Activated CD4-positive, alpha-beta T cell treated with anti-CD3 and anti-CD28 coated beads for 36 hours (primary cell): ENCODE measurements at regions of chr14 and their contacts with region 1.

Region 1: GRCh38 chr14:106622200-106622745 is 1095.9 kb downstream of the TMEM121 start:
- DNase-seq: peak; percentile 52
- ATAC-seq: peak; percentile 27
- H3K4me3 Mint-ChIP-seq: no peak overlapping the region
- H3K27ac Mint-ChIP-seq: no peak overlapping the region
- H3K4me1 Mint-ChIP-seq: peaks cover 13% of the 10 kb centered on the region
- H3K27me3 Mint-ChIP-seq: peaks cover 24% of the 10 kb centered on the region

Region 2: DNA sequence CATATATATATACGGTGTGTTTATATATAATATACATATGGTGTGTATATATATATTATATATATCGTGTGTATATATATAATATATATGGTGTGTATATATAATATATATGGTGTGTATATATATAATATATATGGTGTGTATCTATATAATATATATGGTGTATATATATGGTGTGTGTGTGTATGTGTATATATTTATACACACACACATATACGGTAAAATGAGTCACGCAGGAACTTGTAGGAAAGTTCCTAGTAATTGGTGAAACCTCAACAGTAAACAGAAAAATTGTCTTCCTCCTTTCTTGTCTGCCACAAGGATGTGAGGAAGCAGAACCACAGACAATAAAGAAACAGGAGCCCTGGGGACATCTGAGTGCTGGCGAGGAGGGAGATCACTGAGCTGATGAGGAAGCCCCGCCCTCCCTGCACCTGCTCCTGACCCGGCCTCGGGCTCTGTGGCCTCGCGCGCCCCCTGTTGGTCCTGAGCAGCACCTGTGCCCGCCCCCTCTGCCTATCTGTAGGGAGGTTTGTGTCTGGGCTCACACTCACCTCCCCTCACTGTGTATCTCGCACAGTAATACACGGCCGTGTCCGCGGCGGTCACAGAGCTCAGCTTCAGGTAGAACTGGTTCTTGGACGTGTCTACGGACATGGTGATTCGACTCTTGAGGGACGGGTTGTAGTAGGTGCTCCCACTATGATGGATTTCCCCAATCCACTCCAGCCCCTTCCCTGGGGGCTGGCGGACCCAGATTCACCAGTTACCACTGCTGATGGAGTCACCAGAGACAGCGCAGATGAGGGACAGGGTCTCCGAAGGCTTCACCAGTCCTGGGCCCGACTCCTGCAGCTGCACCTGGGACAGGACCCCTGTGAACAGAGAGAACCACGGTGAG is 16.5 kb before region 1 on chr14:
- CTCF ChIA-PET with region 1: interaction called, 18 read pairs
- POLR2A ChIA-PET with region 1: no interaction called
- intact Hi-C with region 1: no loop called
- DNase-seq: peak; percentile 93
- ATAC-seq: peak; percentile 99
- H3K4me3 Mint-ChIP-seq: no peak overlapping the region
- H3K27ac Mint-ChIP-seq: no peak overlapping the region
- H3K4me1 Mint-ChIP-seq: peaks cover 3% of the 10 kb centered on the region
- H3K27me3 Mint-ChIP-seq: peaks cover 44% of the 10 kb centered on the region

Region 3: GRCh38 chr14:106642090-106642489 is 19.8 kb after region 1 on chr14:
- CTCF ChIA-PET with region 1: interaction called, 14 read pairs
- POLR2A ChIA-PET with region 1: no interaction called
- intact Hi-C with region 1: no loop called
- DNase-seq: no peak
- ATAC-seq: no peak
- H3K4me3 Mint-ChIP-seq: no peak overlapping the region
- H3K27ac Mint-ChIP-seq: no peak overlapping the region
- H3K4me1 Mint-ChIP-seq: no peaks in the 10 kb centered on the region
- H3K27me3 Mint-ChIP-seq: peaks cover 4% of the 10 kb centered on the region